Sigmoid colon (tissue), 7 donors: ENCODE measurements at regions of chr1 and their contacts with region 1.

Region 1: DNA sequence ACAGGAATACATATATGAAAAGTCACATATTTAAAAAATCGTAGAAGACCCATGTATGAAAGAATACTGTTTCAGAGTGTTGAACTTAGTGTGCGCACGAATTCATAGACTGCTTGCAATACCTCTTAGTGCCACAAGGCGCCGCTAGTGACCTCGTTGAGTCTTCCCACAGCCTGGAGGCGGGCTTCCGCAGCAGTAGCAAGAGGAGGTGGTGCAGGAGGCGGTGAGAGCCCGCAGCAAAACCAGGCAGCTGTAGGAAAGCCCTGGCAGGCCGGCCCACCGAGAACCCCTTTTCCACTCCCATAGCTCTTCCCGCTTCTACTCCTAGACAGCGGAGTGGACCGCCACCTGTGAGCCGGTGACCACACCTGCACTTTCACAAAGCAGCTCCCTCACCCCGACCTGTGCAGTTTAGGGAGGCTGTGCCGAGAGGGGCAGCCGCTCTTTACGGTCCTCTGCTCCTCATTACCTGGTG is 23.5 kb downstream of the MTARC1 start:
- DNase-seq: peak; percentile 95
- H3K4me3 ChIP-seq: peak overlapping the region in 3 of 4 donors; percentile 10 to 25 (median 16)
- H3K27ac ChIP-seq: peak overlapping the region in 3 of 4 donors; percentile 46 to 77 (median 58)
- H3K4me1 ChIP-seq: peaks cover 0 to 64% (median 60%) of the 10 kb centered on the region in 4 donors
- H3K27me3 ChIP-seq: no peaks in the 10 kb centered on the region
- CTCF ChIP-seq: peak; percentile 77 to 97 (median 95)
- EP300 ChIP-seq: no peak
- POLR2A ChIP-seq: no peak

Region 2: GRCh38 chr1:221203224-221204054 is 393.2 kb after region 1 on chr1:
- intact Hi-C with region 1: loop called (anchors 5 kb)
- DNase-seq: peak; percentile 88
- H3K4me3 ChIP-seq: no peak overlapping the region
- H3K27ac ChIP-seq: peak overlapping the region; percentile 54 to 70 (median 62)
- H3K4me1 ChIP-seq: peaks cover 0 to 30% (median 14%) of the 10 kb centered on the region in 4 donors
- H3K27me3 ChIP-seq: no peaks in the 10 kb centered on the region
- CTCF ChIP-seq: peak; percentile 46 to 88 (median 72)
- EP300 ChIP-seq: no peak
- POLR2A ChIP-seq: no peak

Region 3: GRCh38 chr1:221230605-221231004 is 420.4 kb after region 1 on chr1:
- intact Hi-C with region 1: loop called (anchors 10 kb)
- DNase-seq: peak; percentile 73
- H3K4me3 ChIP-seq: no peak overlapping the region
- H3K27ac ChIP-seq: peak overlapping the region; percentile 1 to 63 (median 49)
- H3K4me1 ChIP-seq: peaks cover 0 to 54% (median 34%) of the 10 kb centered on the region in 4 donors
- H3K27me3 ChIP-seq: no peaks in the 10 kb centered on the region
- CTCF ChIP-seq: no peak
- EP300 ChIP-seq: peak in 1 of 4 donors; percentile 53
- POLR2A ChIP-seq: no peak

Region 4: GRCh38 chr1:222455188-222455879 is 1645.1 kb after region 1 on chr1:
- intact Hi-C with region 1: loop called (anchors 10 kb)
- DNase-seq: peak; percentile 93
- H3K4me3 ChIP-seq: peak overlapping the region in 2 of 4 donors; percentile 15 to 22
- H3K27ac ChIP-seq: peak overlapping the region; percentile 31 to 64 (median 42)
- H3K4me1 ChIP-seq: peaks cover 0 to 14% (median 11%) of the 10 kb centered on the region in 4 donors
- H3K27me3 ChIP-seq: no peaks in the 10 kb centered on the region
- CTCF ChIP-seq: peak; percentile 79 to 90 (median 87)
- EP300 ChIP-seq: no peak
- POLR2A ChIP-seq: no peak